ENCODE measurements at regions of chr9 and their contacts with region 1.

Region 1: GRCh38 chr9:117704024-117704575 is at the start of gene TLR4:
- DNase-seq: peak; percentile 55
- H3K4me3 ChIP-seq: peak within 1 kb of the TSS; percentile 50
- H3K27me3 ChIP-seq: no peaks in the 10 kb centered on the region
- CTCF ChIP-seq: no peak
- polyA plus RNA-seq, gene TLR4: 5.4 and 9.2 TPM in 2 replicates

Region 2: GRCh38 chr9:117656002-117656401 is 48.1 kb before region 1 on chr9:
- CTCF ChIA-PET with region 1: no interaction called
- POLR2A ChIA-PET with region 1: no interaction called
- DNase-seq: no peak
- H3K4me3 ChIP-seq: no peak overlapping the region
- H3K27me3 ChIP-seq: 0 out of 2 replicates have a peak, but pooled peaks cover 2% of the 10 kb centered on the region
- CTCF ChIP-seq: no peak

Region 3: GRCh38 chr9:117682955-117683710 is 21.0 kb before region 1 on chr9:
- CTCF ChIA-PET with region 1: no interaction called
- POLR2A ChIA-PET with region 1: interaction called, 11 read pairs
- DNase-seq: no peak
- H3K4me3 ChIP-seq: no peak overlapping the region
- H3K27me3 ChIP-seq: no peaks in the 10 kb centered on the region
- CTCF ChIP-seq: no peak

Region 4: DNA sequence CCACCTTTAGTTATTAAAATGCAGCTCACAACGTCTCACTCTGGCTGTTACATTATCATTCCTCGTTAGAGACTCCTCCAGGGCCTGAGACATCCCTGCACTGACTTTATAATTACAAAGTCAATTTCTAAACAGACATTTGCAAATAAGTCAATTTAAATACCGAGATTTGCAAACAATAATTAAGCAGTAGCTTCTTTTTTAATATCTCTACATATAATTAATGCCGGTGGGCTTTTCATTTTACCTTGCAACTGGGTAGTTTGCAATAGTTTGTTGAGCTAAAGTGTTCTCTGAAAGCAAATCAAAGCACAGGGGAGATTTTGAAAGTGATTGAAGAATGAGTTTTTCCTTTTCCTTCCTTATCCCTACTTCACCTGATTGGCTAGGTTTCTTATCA is 154.5 kb after region 1 on chr9:
- CTCF ChIA-PET with region 1: no interaction called
- POLR2A ChIA-PET with region 1: no interaction called
- DNase-seq: no peak
- H3K4me3 ChIP-seq: no peak overlapping the region
- H3K27me3 ChIP-seq: no peaks in the 10 kb centered on the region
- CTCF ChIP-seq: no peak

Region 5: GRCh38 chr9:117917873-117918272 is 213.8 kb after region 1 on chr9:
- CTCF ChIA-PET with region 1: no interaction called
- POLR2A ChIA-PET with region 1: no interaction called
- DNase-seq: no peak
- H3K4me3 ChIP-seq: no peak overlapping the region
- H3K27me3 ChIP-seq: no peaks in the 10 kb centered on the region
- CTCF ChIP-seq: no peak